ENCODE measurements at regions of chr7 and their contacts with region 1.

Region 1: GRCh38 chr7:81638216-81638615 is 131.6 kb downstream of the HGF start:
- DNase-seq: peak; percentile 95
- ATAC-seq: peak; percentile 95
- H3K4me3 ChIP-seq: no peak overlapping the region
- H3K27ac ChIP-seq: peak overlapping the region; percentile 99
- H3K4me1 ChIP-seq: peaks cover 38% of the 10 kb centered on the region
- H3K27me3 ChIP-seq: no peaks in the 10 kb centered on the region
- CTCF ChIP-seq: no peak

Region 2: GRCh38 chr7:81234896-81235295 is 403.3 kb before region 1 on chr7:
- CTCF ChIA-PET with region 1: no interaction called
- POLR2A ChIA-PET with region 1: no interaction called
- intact Hi-C with region 1: no loop called
- DNase-seq: no peak
- ATAC-seq: no peak
- H3K4me3 ChIP-seq: no peak overlapping the region
- H3K27ac ChIP-seq: no peak overlapping the region
- H3K4me1 ChIP-seq: no peaks in the 10 kb centered on the region
- H3K27me3 ChIP-seq: no peaks in the 10 kb centered on the region
- CTCF ChIP-seq: no peak

Region 3: DNA sequence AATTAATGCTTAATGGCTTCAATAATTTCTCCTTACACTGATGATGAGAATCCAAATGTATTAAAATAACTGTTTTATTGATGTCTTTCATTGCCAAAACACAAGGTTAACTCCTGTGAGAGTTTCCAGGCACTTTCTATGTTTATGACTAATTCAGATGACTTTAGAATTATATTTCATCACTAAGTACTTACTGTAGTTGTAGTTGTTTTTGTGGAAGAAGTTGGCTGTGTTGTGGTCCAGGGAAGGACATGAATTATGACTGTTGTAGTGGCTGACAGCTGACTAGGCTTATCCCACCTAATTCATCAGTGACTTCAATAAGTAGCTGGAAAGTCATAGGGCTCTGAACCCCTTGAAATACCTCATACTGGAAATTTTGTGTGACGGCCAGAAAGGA is 123.2 kb before region 1 on chr7:
- CTCF ChIA-PET with region 1: no interaction called
- POLR2A ChIA-PET with region 1: no interaction called
- intact Hi-C with region 1: loop called (anchors 5 kb)
- DNase-seq: peak; percentile 23
- ATAC-seq: peak; percentile 53
- H3K4me3 ChIP-seq: no peak overlapping the region
- H3K27ac ChIP-seq: peak overlapping the region; percentile 50
- H3K4me1 ChIP-seq: peaks cover 28% of the 10 kb centered on the region
- H3K27me3 ChIP-seq: no peaks in the 10 kb centered on the region
- CTCF ChIP-seq: no peak

Region 4: DNA sequence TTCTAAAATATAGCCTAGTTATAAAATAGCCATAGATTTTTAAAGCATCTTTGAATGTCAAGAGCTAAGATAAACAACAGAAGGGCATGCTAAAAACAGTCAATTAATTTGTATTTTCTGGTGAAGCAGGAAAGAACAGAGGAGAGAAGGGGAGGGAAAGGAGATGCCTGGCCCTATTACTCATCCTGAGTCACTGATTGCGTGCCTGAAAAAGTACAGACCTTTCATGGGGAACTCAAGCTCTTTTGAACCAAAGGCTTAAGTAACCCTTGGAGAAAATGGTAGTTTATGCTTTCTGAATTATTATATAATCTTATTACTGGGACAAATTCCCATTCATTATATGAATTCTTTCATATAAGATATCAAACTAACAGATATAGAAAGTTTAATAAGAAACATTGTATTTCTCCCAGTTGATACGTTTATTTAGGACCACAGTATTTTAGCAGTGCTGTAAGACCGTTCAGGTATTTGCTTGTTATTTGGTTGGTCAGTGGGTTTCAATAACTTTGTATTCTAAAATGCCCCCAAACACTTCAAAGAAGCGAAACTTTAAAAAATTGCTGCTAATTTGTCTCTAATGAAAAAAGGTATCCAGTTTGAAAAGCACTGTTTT is 19.7 kb before region 1 on chr7:
- CTCF ChIA-PET with region 1: no interaction called
- POLR2A ChIA-PET with region 1: no interaction called
- intact Hi-C with region 1: loop called (anchors 1 kb)
- DNase-seq: peak; percentile 90
- ATAC-seq: peak; percentile 86
- H3K4me3 ChIP-seq: no peak overlapping the region
- H3K27ac ChIP-seq: peak overlapping the region; percentile 94
- H3K4me1 ChIP-seq: peaks cover 38% of the 10 kb centered on the region
- H3K27me3 ChIP-seq: no peaks in the 10 kb centered on the region
- CTCF ChIP-seq: no peak

Region 5: GRCh38 chr7:81684513-81685269 is 46.5 kb after region 1 on chr7:
- CTCF ChIA-PET with region 1: no interaction called
- POLR2A ChIA-PET with region 1: no interaction called
- intact Hi-C with region 1: loop called (anchors 2 kb)
- DNase-seq: peak; percentile 98
- ATAC-seq: peak; percentile 99
- H3K4me3 ChIP-seq: peak overlapping the region; percentile 46; the same call in 1 of the 2 replicates
- H3K27ac ChIP-seq: peak overlapping the region; percentile 95
- H3K4me1 ChIP-seq: peaks cover 37% of the 10 kb centered on the region
- H3K27me3 ChIP-seq: no peaks in the 10 kb centered on the region
- CTCF ChIP-seq: no peak

Region 6: DNA sequence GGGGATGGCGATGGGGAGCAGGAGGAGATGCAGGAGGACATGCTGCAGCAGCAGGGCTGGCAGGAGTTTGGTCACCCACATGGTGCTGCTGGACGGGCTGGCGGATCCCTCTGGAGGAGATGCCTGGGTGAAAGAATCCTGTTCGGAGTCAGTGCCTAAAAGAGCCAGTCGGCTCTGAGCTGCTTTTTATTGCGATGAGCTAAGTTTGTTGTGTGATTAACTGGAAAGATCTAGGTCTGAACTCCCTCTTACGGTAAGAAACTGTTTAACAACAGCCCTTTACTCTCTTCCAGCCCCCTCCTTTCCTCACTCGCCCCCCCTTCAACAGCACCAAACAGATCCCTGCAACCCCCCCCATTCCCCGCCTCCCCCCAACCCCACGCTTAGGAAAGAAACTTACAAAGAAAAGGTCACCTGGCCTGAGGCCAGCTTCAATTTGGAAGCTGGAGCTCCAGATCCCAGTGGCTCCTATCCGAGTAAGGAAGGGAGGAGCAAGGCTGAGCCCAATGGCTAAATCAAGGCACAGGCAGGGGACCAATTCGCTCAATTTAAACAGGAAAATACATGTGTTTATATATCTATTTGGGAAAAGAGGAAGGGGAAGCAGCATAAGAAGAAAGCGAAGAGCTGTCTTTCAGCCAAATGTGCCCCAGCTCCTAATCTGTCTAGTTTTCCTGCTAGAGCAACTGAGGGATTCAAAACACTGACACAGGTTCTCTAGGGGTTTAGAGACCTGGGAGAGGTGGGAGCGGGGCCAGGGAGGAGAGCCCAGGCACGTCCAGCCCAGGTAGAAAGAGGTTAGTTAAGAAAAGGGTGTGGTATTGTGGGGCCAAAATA is 131.9 kb after region 1 on chr7 and contains the start of gene HGF:
- CTCF ChIA-PET with region 1: no interaction called
- POLR2A ChIA-PET with region 1: interaction called, 3 read pairs
- intact Hi-C with region 1: loop called (anchors 5 kb)
- DNase-seq: peak; percentile 58
- ATAC-seq: peak; percentile 96
- H3K4me3 ChIP-seq: peak within 1 kb of the TSS; percentile 38; the same call in 1 of the 2 replicates
- H3K27ac ChIP-seq: no peak within 1 kb of the TSS
- H3K4me1 ChIP-seq: no peaks in the 10 kb centered on the region; the same call in 1 of the 2 replicates
- H3K27me3 ChIP-seq: no peaks in the 10 kb centered on the region
- CTCF ChIP-seq: no peak; the same call in 1 of the 2 replicates
- total RNA-seq, gene HGF: 0.15 TPM in 1 of 2 replicates, not detected in the other

Measured in PC-3 (cell line).